HCT116 (cell line): ENCODE measurements at regions of chr11 and their contacts with region 1.

Region 1: GRCh38 chr11:17991783-17992433 is 20.9 kb downstream of the SERGEF start:
- DNase-seq: peak; percentile 42
- ATAC-seq: peak; percentile 85
- H3K4me3 ChIP-seq: no peak overlapping the region
- H3K27ac ChIP-seq: no peak overlapping the region
- H3K4me1 ChIP-seq: peaks cover 0 to 5% of the 10 kb centered on the region in 2 experiments; a peak in 2 of 4 replicates
- H3K27me3 ChIP-seq: no peaks in the 10 kb centered on the region
- CTCF ChIP-seq: peak; percentile 54 to 89 (median 83); a peak in 5 of 6 replicates
- POLR2A ChIP-seq: no peak
- RAD21 ChIP-seq: peak; percentile 69

Region 2: GRCh38 chr11:17873586-17873985 is 118.3 kb before region 1 on chr11:
- CTCF ChIA-PET with region 1: no interaction called
- POLR2A ChIA-PET with region 1: no interaction called
- RAD21 ChIA-PET with region 1: no interaction called
- intact Hi-C with region 1: no loop called
- DNase-seq: no peak
- ATAC-seq: no peak
- H3K4me3 ChIP-seq: no peak overlapping the region
- H3K27ac ChIP-seq: no peak overlapping the region
- H3K4me1 ChIP-seq: no peaks in the 10 kb centered on the region
- H3K27me3 ChIP-seq: no peaks in the 10 kb centered on the region
- CTCF ChIP-seq: no peak
- POLR2A ChIP-seq: no peak
- RAD21 ChIP-seq: no peak

Region 3: GRCh38 chr11:18105802-18106574 is 114.1 kb after region 1 on chr11 and contains the start of gene SAAL1:
- CTCF ChIA-PET with region 1: no interaction called
- POLR2A ChIA-PET with region 1: no interaction called
- RAD21 ChIA-PET with region 1: no interaction called
- intact Hi-C with region 1: loop called (anchors 5 kb)
- DNase-seq: peak; percentile 74
- ATAC-seq: peak; percentile 98
- H3K4me3 ChIP-seq: peak within 1 kb of the TSS; percentile 95 to 96
- H3K27ac ChIP-seq: peak within 1 kb of the TSS; percentile 61; the same call in 1 of the 2 replicates
- H3K4me1 ChIP-seq: peaks cover 7 to 14% of the 10 kb centered on the region in 2 experiments
- H3K27me3 ChIP-seq: no peaks in the 10 kb centered on the region
- CTCF ChIP-seq: peak; percentile 58 to 82 (median 81)
- POLR2A ChIP-seq: peak; percentile 48
- RAD21 ChIP-seq: no peak
- total RNA-seq, gene SAAL1: 41.2 TPM